ENCODE measurements at regions of chr15 and their contacts with region 1.

Region 1: GRCh38 chr15:35078221-35078915 is 6.7 kb downstream of the NANOGP8 start:
- DNase-seq: peak; percentile 39
- H3K4me3 Mint-ChIP-seq: no peak overlapping the region
- H3K27ac Mint-ChIP-seq: no peak overlapping the region
- H3K4me1 Mint-ChIP-seq: no peaks in the 10 kb centered on the region
- H3K27me3 Mint-ChIP-seq: peaks cover 1% of the 10 kb centered on the region

Region 2: GRCh38 chr15:35028235-35028984 is 50.0 kb before region 1 on chr15:
- CTCF ChIA-PET with region 1: no interaction called
- POLR2A ChIA-PET with region 1: no interaction called
- intact Hi-C with region 1: no loop called
- DNase-seq: no peak
- H3K4me3 Mint-ChIP-seq: no peak overlapping the region
- H3K27ac Mint-ChIP-seq: no peak overlapping the region
- H3K4me1 Mint-ChIP-seq: no peaks in the 10 kb centered on the region
- H3K27me3 Mint-ChIP-seq: peaks cover 3% of the 10 kb centered on the region

Region 3: GRCh38 chr15:35206060-35206675 is 127.8 kb after region 1 on chr15:
- CTCF ChIA-PET with region 1: interaction called, 3 read pairs
- POLR2A ChIA-PET with region 1: no interaction called
- intact Hi-C with region 1: loop called (anchors 10 kb)
- DNase-seq: no peak
- H3K4me3 Mint-ChIP-seq: no peak overlapping the region
- H3K27ac Mint-ChIP-seq: no peak overlapping the region
- H3K4me1 Mint-ChIP-seq: no peaks in the 10 kb centered on the region
- H3K27me3 Mint-ChIP-seq: no peaks in the 10 kb centered on the region

Region 4: DNA sequence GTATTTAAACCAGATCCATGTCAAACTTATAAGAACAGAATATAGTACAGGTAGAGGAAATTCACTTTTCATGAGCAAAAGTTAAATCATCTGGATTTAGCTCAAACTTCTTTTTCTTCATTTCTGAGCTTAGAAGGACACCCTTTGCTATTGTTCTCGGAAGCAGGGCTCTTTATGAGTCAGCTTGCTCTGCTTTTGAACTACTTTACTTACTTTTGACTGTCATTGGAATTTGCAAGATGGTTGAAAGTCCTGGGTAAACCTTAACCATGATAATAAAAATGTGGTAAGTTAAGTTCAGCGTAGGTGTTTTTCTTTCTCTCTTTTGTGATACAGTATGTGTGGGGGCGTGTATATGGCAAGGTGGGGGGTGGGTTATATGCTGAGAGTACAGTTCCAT is 780.3 kb after region 1 on chr15:
- CTCF ChIA-PET with region 1: no interaction called
- POLR2A ChIA-PET with region 1: no interaction called
- intact Hi-C with region 1: no loop called
- DNase-seq: no peak
- H3K4me3 Mint-ChIP-seq: no peak overlapping the region
- H3K27ac Mint-ChIP-seq: no peak overlapping the region
- H3K4me1 Mint-ChIP-seq: no peaks in the 10 kb centered on the region
- H3K27me3 Mint-ChIP-seq: no peaks in the 10 kb centered on the region